ENCODE measurements at regions of chr3 and their contacts with region 1.

Region 1: DNA sequence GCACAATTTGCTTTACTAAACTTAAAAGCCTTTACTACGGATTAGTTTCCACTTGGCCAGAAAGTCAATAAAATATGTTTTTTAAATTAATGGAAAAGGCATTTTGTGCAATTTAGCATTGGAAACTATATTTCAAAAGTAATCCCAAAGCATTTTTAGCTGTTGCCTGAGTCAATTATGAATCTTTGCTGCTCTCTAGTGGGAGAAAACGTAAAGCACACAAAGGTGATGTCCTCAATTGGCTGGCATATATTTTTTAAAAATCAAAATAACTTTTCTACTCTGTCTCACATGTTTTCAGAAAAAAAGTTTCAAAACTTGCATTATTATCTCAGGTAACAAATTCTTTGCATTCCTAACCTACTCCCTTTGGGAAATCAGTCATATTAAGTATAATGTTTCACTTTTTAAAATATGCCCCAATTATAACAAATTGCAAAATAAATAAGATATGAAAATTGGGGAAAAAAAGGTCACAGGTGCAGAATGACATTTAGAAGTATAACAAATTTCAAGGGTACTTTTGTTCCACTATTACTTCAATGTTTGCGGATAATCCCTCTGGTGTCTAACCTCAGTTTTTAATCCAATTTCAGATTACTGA is 47.2 kb upstream of the TEX55 start:
- DNase-seq: peak; percentile 23
- H3K4me3 ChIP-seq: no peak overlapping the region
- H3K27ac ChIP-seq: no peak overlapping the region
- H3K4me1 ChIP-seq: no peaks in the 10 kb centered on the region
- H3K27me3 ChIP-seq: no peaks in the 10 kb centered on the region
- CTCF ChIP-seq: peak; percentile 72 to 78

Region 2: GRCh38 chr3:118890186-118890585 is 208.5 kb before region 1 on chr3:
- CTCF ChIA-PET with region 1: no interaction called
- dilution Hi-C with region 1: loop called (anchors 10 kb)
- in situ Hi-C with region 1: no loop called
- intact Hi-C with region 1: no loop called
- DNase-seq: no peak
- H3K4me3 ChIP-seq: no peak overlapping the region
- H3K27ac ChIP-seq: no peak overlapping the region
- H3K4me1 ChIP-seq: no peaks in the 10 kb centered on the region
- H3K27me3 ChIP-seq: peaks cover 8% of the 10 kb centered on the region
- CTCF ChIP-seq: no peak

Region 3: DNA sequence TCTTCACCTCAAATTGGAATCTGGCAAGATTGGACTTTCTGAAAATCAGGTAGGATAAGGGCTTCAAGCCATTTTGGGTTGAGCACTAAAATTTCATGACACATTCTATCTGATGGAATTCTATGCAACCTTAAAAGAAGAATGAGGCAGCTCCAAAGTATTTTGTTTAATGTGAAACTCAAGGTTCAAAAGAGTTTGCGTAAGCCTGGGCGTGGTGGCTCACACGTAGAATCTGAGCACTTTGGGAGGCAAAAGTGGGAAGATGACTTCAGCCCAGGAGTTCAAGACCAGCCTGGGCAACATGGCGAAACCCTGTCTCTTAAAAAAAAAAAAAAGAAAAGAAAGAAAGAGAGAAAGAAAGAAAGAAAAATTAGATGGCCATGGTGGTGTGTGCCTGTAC is 495.4 kb after region 1 on chr3:
- CTCF ChIA-PET with region 1: interaction called, 12 read pairs
- dilution Hi-C with region 1: no loop called
- in situ Hi-C with region 1: no loop called
- intact Hi-C with region 1: no loop called
- DNase-seq: no peak
- H3K4me3 ChIP-seq: no peak overlapping the region
- H3K27ac ChIP-seq: no peak overlapping the region
- H3K4me1 ChIP-seq: no peaks in the 10 kb centered on the region
- H3K27me3 ChIP-seq: peaks cover 4% of the 10 kb centered on the region
- CTCF ChIP-seq: no peak